Heart left ventricle (tissue), 16 donors: ENCODE measurements at regions of chr2 and their contacts with region 1.

Region 1: GRCh38 chr2:111120253-111121027 is at the start of gene BCL2L11:
- DNase-seq: peak; percentile 91 to 95 (median 94)
- ATAC-seq: peak; percentile 67 to 89 (median 84)
- H3K4me3 ChIP-seq: peak within 1 kb of the TSS; percentile 64 to 98 (median 84)
- H3K27ac ChIP-seq: peak within 1 kb of the TSS in 11 of 12 donors; percentile 62 to 93 (median 80)
- H3K4me1 ChIP-seq: peaks cover 4 to 63% (median 49%) of the 10 kb centered on the region in 12 donors
- H3K27me3 ChIP-seq: peaks cover 0 to 46% (median 4%) of the 10 kb centered on the region in 9 donors
- CTCF ChIP-seq: peak in 8 of 12 donors; percentile 8 to 54 (median 22)
- POLR2A ChIP-seq: peak; percentile 73 to 95
- total RNA-seq, gene BCL2L11: 4.9 to 16.2 (median 7.3) TPM

Region 2: DNA sequence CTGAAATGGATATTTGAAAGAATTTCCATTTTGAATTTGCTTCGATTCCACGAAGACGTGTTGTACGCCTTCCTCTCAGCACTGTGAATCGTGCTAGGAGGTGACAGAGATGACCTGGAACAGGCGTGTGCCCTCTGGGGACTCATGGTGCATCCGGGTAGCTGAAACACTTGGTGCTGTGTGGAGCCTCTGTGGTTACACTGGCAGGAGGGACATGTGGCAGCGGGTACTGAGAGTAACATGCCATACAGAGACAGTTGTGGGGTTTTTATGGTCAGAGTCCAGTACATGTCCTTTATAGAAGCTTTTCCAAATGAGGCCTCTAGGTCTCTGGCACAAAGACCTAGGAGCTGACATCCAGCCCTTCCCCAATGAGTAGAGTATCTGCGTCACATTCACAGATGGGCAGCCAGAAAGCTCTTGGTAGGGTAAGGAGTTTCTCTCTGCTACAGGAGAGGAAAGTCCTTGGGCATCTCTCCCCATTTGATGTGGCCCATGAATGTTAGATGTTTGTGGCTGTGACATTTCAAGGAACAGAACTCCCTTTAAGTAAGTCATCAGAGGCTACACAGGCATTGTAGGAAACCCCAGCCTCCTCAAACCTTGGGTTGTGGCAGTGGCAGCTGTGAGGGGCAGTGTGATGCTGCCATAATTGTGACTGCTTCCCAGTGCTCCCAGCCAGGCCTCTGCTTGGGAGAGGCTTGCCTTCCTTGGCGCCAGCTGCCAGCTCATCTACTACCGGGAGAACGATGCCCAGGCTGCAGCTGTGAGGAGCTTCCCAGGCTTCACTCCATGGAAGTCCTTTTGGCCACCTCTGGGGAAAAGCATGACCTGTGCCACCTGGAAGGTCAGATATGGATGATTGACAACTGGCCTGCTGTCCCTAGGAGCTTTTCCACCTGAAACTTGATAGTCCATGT is 307.5 kb before region 1 on chr2:
- intact Hi-C with region 1: loop called (anchors 5 to 10 kb)
- DNase-seq: no peak
- ATAC-seq: no peak
- H3K4me3 ChIP-seq: no peak overlapping the region
- H3K27ac ChIP-seq: no peak overlapping the region
- H3K4me1 ChIP-seq: peaks cover 0 to 4% (median 0%) of the 10 kb centered on the region in 12 donors
- H3K27me3 ChIP-seq: no peaks in the 10 kb centered on the region
- CTCF ChIP-seq: no peak
- POLR2A ChIP-seq: no peak

Region 3: GRCh38 chr2:111100765-111101162 is 19.7 kb before region 1 on chr2:
- intact Hi-C with region 1: no loop called
- DNase-seq: no peak
- ATAC-seq: no peak
- H3K4me3 ChIP-seq: no peak overlapping the region
- H3K27ac ChIP-seq: no peak overlapping the region
- H3K4me1 ChIP-seq: no peaks in the 10 kb centered on the region
- H3K27me3 ChIP-seq: no peaks in the 10 kb centered on the region
- CTCF ChIP-seq: no peak
- POLR2A ChIP-seq: no peak

Region 4: DNA sequence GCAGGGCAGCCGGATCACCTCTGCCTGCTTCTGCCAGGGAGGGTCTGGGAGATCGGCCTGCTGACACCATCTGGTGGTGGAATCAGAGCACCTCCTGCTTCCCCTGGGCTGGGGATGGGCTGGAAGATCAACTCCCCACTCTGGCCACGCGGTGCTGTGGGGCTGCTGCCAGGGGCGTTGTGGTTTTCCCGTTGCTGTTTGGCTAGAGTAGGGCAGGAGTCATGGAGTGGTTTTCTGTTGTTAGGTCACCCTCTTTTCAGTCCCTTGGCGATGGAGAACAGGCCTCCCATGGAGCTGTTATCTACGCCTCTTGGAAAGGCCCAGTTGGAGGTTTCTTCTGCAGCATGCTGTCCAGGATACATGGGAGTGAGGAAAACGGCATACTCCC is 15.5 kb after region 1 on chr2:
- intact Hi-C with region 1: loop called in 1 of 10 experiments (anchors 2 kb)
- DNase-seq: peak in 4 of 5 donors; percentile 25 to 52 (median 41)
- ATAC-seq: peak; percentile 57 to 86 (median 78)
- H3K4me3 ChIP-seq: no peak overlapping the region
- H3K27ac ChIP-seq: no peak overlapping the region
- H3K4me1 ChIP-seq: peaks cover 0 to 47% (median 27%) of the 10 kb centered on the region in 12 donors
- H3K27me3 ChIP-seq: no peaks in the 10 kb centered on the region
- CTCF ChIP-seq: peak in 9 of 12 donors; percentile 24 to 41 (median 30)
- POLR2A ChIP-seq: no peak

Region 5: DNA sequence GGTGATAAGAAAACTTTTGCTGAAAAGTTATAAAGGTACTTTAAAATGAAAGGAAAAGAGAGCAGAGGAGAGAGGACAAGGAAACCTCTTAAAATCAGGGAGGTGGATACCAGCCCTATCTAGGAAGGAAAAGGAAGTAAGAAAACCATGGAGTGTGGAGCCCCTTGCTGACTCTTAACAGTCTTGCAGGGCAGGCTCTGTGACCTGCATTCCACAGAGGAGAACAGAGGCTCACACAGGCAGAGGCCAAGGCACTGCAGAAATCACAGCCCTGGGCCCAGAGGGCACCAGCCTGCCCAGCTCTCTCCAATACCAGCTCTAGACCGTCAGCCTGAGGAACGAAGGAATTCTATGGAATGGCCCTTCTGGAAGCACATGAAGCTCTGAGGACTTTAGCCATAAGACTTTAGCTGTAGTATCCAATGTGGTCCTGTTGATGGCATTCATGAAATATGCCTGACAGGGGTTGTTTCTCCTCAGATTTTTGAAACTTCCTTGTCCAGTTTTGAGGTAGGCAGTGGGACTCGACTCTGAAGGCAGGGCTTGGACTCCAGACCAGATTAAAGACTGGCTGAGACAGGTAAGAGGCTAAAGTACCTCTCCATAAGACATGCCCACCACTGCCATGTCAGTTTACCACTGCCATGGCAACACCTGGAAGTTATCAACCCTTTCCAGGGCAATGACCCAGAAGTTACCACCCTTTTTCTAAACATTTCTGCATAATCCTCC is 547.3 kb after region 1 on chr2:
- intact Hi-C with region 1: loop called (anchors 2 to 10 kb)
- DNase-seq: peak in 3 of 5 donors; percentile 36 to 50 (median 42)
- ATAC-seq: peak; percentile 81 to 96 (median 92)
- H3K4me3 ChIP-seq: no peak overlapping the region
- H3K27ac ChIP-seq: no peak overlapping the region
- H3K4me1 ChIP-seq: peaks cover 0 to 22% (median 0%) of the 10 kb centered on the region in 12 donors
- H3K27me3 ChIP-seq: no peaks in the 10 kb centered on the region
- CTCF ChIP-seq: peak; percentile 30 to 74 (median 54)
- POLR2A ChIP-seq: no peak